Activated CD4-positive, alpha-beta T cell treated with anti-CD3 and anti-CD28 coated beads for 36 hours (primary cell): ENCODE measurements at regions of chr13 and their contacts with region 1.

Region 1: GRCh38 chr13:50236898-50237318 is 221.7 kb downstream of the KCNRG start:
- DNase-seq: peak; percentile 60
- ATAC-seq: peak; percentile 92
- H3K4me3 Mint-ChIP-seq: peak overlapping the region; percentile 47
- H3K27ac Mint-ChIP-seq: peak overlapping the region; percentile 74
- H3K4me1 Mint-ChIP-seq: peaks cover 47% of the 10 kb centered on the region
- H3K27me3 Mint-ChIP-seq: peaks cover 18% of the 10 kb centered on the region

Region 2: DNA sequence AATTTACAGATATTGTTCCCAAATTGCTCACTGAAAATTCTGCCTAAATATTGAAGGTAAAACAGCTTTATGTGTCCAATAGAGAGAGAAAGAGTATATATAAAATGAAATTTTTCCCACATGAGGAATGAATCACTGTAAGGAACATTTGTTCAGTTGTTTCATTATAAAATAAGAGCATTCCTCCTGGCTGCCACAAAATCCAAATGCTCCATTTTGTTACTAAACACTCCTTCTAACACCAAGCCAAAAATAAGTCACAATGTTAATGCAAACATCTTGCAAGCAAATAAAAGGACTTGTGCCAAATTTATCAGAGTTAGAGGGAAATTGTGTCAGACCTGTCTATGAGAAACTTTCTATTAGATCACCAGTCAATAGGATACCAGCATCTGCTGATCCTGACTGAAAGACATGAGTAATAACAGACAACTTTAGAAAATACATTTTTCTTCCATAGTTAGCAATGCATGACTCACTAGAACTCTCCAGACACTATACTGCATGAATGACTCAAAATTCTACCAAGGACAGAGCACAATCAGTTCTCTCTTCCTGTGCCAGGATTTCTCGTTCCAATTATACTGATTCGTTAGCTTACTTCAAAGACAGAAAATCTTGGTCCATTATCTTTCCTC is 1344.7 kb before region 1 on chr13:
- CTCF ChIA-PET with region 1: no interaction called
- POLR2A ChIA-PET with region 1: no interaction called
- intact Hi-C with region 1: loop called in 1 of 2 experiments (anchors 10 kb)
- DNase-seq: no peak
- ATAC-seq: peak; percentile 97
- H3K4me3 Mint-ChIP-seq: no peak overlapping the region
- H3K27ac Mint-ChIP-seq: peak overlapping the region; percentile 51
- H3K4me1 Mint-ChIP-seq: peaks cover 34% of the 10 kb centered on the region
- H3K27me3 Mint-ChIP-seq: peaks cover 7% of the 10 kb centered on the region

Region 3: DNA sequence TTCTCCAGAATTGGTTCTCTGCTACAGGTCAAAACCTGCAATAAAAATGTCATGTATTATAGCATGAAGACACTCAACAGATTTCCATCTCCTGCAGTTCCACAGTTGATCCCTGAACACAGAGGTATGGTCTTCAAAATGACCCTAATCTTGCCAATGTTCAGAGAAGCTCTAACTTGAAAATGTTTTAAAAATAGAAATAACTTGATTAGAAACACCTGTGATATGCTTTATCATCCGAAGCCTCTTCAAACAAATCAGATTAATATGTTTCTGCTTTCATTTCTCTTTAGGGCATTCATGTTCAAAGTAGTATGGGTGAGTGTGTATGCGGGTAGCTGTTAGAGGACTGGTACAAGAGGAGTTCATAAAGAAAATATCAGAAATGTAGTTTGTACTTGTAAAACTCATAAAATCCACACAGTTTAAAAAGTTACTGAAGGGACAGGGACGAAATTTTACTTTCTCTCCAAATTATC is 161.2 kb before region 1 on chr13:
- CTCF ChIA-PET with region 1: no interaction called
- POLR2A ChIA-PET with region 1: no interaction called
- intact Hi-C with region 1: loop called in 1 of 2 experiments (anchors 1 kb)
- DNase-seq: no peak
- ATAC-seq: no peak
- H3K4me3 Mint-ChIP-seq: no peak overlapping the region
- H3K27ac Mint-ChIP-seq: no peak overlapping the region
- H3K4me1 Mint-ChIP-seq: peaks cover 33% of the 10 kb centered on the region
- H3K27me3 Mint-ChIP-seq: peaks cover 15% of the 10 kb centered on the region

Region 4: GRCh38 chr13:50123862-50124536 is 112.9 kb before region 1 on chr13:
- CTCF ChIA-PET with region 1: interaction called, 3 read pairs
- POLR2A ChIA-PET with region 1: no interaction called
- intact Hi-C with region 1: loop called in 1 of 2 experiments (anchors 2 kb)
- DNase-seq: peak; percentile 86
- ATAC-seq: peak; percentile 68
- H3K4me3 Mint-ChIP-seq: peak overlapping the region; percentile 72
- H3K27ac Mint-ChIP-seq: peak overlapping the region; percentile 89
- H3K4me1 Mint-ChIP-seq: peaks cover 49% of the 10 kb centered on the region
- H3K27me3 Mint-ChIP-seq: peaks cover 13% of the 10 kb centered on the region

Region 5: DNA sequence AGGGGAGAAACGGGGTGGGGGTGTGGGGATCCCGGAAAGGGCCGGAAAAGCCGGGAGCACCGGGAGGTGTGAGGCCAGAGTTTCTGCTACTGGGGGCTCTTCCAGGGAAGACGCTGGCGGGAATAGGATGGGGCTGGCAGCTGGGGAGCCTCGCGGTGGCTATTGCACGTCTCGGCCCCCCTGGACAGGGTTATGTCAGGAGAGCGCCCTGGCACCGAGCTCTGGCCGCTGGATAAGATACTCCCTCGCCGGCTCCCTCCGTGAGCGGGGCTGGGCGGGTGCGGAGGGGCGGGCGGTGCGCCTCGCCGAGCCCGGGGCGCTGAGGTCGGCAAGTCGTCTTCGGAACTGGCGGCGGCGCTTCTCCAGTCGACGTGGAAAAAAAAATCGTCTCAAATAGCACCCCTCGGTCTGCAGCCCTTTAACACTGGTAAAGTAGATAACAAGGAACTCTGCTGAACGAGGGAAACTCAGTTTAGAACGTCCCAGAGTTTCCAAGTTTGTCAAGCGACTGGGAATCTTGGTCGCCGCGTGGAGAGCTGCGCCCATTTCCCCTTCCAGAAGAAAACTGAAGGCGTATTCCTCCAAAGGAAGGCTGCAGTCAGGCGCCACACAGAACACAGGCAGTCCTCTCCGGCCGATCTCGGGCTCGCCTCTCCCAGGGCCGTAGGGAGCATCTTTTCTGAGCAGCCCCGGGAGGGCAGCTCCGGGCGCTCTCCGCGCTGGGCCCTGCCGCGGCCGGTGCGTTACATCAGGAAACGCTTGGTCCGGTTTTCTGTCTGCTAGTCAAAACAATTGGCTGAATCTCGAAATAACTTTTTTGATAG is 106.6 kb before region 1 on chr13:
- CTCF ChIA-PET with region 1: interaction called, 3 read pairs
- POLR2A ChIA-PET with region 1: interaction called, 7 read pairs
- intact Hi-C with region 1: loop called (anchors 2 to 5 kb)
- DNase-seq: peak; percentile 52
- ATAC-seq: no peak
- H3K4me3 Mint-ChIP-seq: peak overlapping the region; percentile 67
- H3K27ac Mint-ChIP-seq: no peak overlapping the region
- H3K4me1 Mint-ChIP-seq: peaks cover 60% of the 10 kb centered on the region
- H3K27me3 Mint-ChIP-seq: peaks cover 63% of the 10 kb centered on the region

Region 6: DNA sequence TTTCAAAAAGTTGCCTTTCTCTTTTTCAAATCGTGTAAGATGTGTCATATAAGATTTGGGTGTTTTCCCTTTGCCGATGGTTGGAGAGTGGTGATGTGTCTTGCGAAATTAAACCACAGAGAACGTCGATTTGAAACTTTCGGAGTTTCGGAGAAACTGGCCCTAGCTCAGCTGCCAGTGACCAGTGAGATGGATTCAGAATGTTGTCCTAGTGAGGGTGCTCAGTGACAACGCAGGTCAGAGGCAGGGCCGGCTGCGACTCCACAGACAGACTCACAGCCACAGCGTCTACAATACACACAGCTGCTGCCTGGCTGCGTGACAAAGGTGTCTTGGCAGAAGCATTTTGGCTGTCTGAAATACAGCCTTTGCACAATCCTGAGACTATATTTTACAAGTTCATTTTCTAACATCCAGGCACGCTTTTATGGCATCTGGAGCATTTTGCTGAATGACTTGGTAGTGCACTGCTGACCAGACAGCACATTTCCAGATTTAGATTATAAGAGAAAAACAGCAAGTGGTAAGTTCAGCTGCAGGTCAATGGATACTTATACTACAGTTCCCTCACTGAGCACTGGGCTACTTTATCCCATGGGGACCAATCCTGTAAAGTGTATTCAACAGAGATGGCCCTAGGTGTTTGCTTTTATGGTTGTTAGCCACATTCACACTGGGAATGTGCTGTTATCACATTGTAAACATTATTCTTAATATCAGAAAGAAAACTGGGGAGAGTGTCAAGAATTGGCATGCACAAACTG is 14.2 kb before region 1 on chr13:
- CTCF ChIA-PET with region 1: interaction called, 6 read pairs
- POLR2A ChIA-PET with region 1: interaction called, 6 read pairs
- intact Hi-C with region 1: loop called (anchors 1 kb)
- DNase-seq: peak; percentile 28
- ATAC-seq: no peak
- H3K4me3 Mint-ChIP-seq: no peak overlapping the region
- H3K27ac Mint-ChIP-seq: no peak overlapping the region
- H3K4me1 Mint-ChIP-seq: peaks cover 46% of the 10 kb centered on the region
- H3K27me3 Mint-ChIP-seq: peaks cover 33% of the 10 kb centered on the region

Region 7: DNA sequence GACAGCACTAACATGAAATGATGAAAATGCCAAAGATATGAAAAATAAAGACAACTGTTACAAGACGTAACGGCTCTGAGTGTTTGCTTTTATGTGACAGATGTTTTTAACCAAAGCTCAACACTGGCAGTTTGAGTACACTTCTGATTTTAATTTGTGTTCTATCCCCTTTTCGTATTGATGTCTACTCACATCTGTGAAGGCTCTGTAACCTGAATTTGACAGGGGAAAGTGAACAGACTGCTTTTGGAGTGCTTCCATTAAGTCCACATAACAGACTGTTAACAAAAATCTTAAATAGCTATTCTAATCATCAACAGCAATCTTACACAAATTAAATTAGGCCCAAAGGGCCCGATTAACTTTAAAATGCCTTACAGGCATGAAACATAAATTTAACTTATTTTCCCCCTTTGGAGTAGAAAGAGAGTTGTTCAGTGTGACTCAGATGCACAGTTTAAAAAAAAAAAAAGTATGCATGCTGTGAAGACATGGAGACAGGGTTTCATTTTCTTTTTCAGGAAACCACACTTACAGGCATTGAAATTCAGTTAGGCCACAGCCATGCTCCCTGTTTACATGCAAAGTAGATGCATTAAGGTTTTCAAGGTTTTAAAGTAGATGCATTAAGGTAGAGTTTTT is 656.4 kb after region 1 on chr13:
- CTCF ChIA-PET with region 1: no interaction called
- POLR2A ChIA-PET with region 1: no interaction called
- intact Hi-C with region 1: loop called in 1 of 2 experiments (anchors 5 kb)
- DNase-seq: peak; percentile 37
- ATAC-seq: peak; percentile 94
- H3K4me3 Mint-ChIP-seq: peak overlapping the region; percentile 50
- H3K27ac Mint-ChIP-seq: peak overlapping the region; percentile 89
- H3K4me1 Mint-ChIP-seq: peaks cover 40% of the 10 kb centered on the region
- H3K27me3 Mint-ChIP-seq: no peaks in the 10 kb centered on the region